Dorsolateral prefrontal cortex (tissue), 120 donors: ENCODE measurements at regions of chr10 and their contacts with region 1.

Region 1: DNA sequence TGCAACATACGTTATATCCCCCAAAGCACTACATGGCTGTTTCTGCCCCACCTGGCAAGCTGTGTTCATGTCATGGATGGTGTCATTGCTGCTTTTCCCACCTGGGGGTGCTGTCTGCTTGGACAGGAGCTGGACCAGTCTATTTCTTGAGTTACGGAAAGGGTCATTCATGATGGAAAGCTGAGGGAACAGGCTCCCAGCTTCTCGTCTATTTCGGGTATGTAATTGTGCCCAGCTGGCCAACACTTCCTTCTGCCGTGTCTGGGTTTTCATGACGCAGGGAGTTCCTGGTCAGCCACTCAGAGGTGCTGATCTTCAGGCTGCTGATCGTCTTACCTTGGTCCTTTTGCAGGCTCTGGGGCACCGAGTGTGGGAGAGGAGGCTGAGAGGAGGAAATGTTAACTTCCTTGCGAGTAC is 8.6 kb downstream of the BTBD16 start:
- DNase-seq: peak; percentile 14 to 84 (median 73)
- H3K4me3 ChIP-seq: peak overlapping the region in 7 of 59 donors; percentile 1 to 40 (median 14)
- H3K27ac ChIP-seq: peak overlapping the region in 24 of 59 donors; percentile 0 to 70 (median 32)
- H3K27me3 ChIP-seq: no peaks in the 10 kb centered on the region
- CTCF ChIP-seq: peak; percentile 33 to 87 (median 74)

Region 2: DNA sequence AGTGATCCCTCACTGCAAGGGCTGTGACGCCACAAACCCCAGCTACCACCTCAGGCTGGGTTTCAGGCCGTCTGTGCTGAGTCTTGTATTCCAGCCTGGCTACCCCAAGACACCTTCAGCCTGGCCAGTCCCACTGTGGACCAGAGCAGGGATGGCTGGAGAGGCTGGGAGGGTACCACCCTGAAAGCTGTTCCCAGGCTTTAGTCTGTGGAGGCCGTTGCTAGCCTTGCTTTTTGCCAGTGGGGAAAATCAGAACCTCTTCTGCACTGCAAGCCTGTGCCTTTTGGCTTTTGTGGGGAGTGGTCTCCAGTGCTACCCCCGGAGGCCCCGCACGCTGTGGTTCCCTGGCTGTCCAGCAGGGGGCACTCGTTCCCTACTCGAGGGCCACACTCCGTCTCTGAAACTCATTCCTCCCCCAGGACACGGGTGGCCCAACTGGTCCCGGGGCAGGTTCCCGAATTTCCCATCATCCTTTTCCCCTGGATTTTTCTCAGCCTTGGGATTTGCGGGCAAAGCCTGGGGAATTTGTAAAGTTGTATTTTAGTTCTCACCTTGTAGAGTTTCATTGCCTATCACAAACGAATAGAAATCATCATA is 137.0 kb before region 1 on chr10:
- intact Hi-C with region 1: no loop called
- DNase-seq: peak in 8 of 10 donors; percentile 54 to 81 (median 70)
- H3K4me3 ChIP-seq: peak overlapping the region in 30 of 59 donors; percentile 5 to 60 (median 30)
- H3K27ac ChIP-seq: peak overlapping the region in 23 of 59 donors; percentile 2 to 71 (median 44)
- H3K27me3 ChIP-seq: no peaks in the 10 kb centered on the region
- CTCF ChIP-seq: peak in 55 of 56 donors; percentile 85 to 99 (median 98)

Region 3: GRCh38 chr10:122298598-122299301 is 19.0 kb after region 1 on chr10:
- intact Hi-C with region 1: loop called in 1 of 2 experiments (anchors 2 kb)
- DNase-seq: peak in 9 of 10 donors; percentile 38 to 81 (median 76)
- H3K4me3 ChIP-seq: peak overlapping the region in 55 of 59 donors; percentile 6 to 66 (median 38)
- H3K27ac ChIP-seq: peak overlapping the region in 56 of 59 donors; percentile 38 to 100 (median 94)
- H3K27me3 ChIP-seq: no peaks in the 10 kb centered on the region
- CTCF ChIP-seq: peak; percentile 65 to 99 (median 96)

Region 4: GRCh38 chr10:122435212-122435827 is 155.6 kb after region 1 on chr10:
- intact Hi-C with region 1: loop called in 1 of 2 experiments (anchors 5 kb)
- DNase-seq: no peak
- H3K4me3 ChIP-seq: no peak overlapping the region
- H3K27ac ChIP-seq: peak overlapping the region in 31 of 59 donors; percentile 2 to 71 (median 30)
- H3K27me3 ChIP-seq: no peaks in the 10 kb centered on the region
- CTCF ChIP-seq: peak; percentile 71 to 96 (median 85)

Region 5: GRCh38 chr10:122648599-122649428 is 369.1 kb after region 1 on chr10:
- intact Hi-C with region 1: loop called in 1 of 2 experiments (anchors 5 kb)
- DNase-seq: peak; percentile 13 to 79 (median 66)
- H3K4me3 ChIP-seq: no peak overlapping the region
- H3K27ac ChIP-seq: no peak overlapping the region
- H3K27me3 ChIP-seq: peaks cover 0 to 15% (median 0%) of the 10 kb centered on the region in 45 donors
- CTCF ChIP-seq: peak; percentile 45 to 94 (median 86)

Region 6: GRCh38 chr10:122703439-122704118 is 423.8 kb after region 1 on chr10:
- intact Hi-C with region 1: loop called in 1 of 2 experiments (anchors 5 kb)
- DNase-seq: peak; percentile 30 to 88 (median 76)
- H3K4me3 ChIP-seq: no peak overlapping the region
- H3K27ac ChIP-seq: peak overlapping the region in 2 of 59 donors; percentile 57 to 75
- H3K27me3 ChIP-seq: peaks cover 0 to 4% (median 0%) of the 10 kb centered on the region in 45 donors
- CTCF ChIP-seq: peak in 55 of 56 donors; percentile 26 to 97 (median 89)